Naive thymus-derived CD4-positive, alpha-beta T cell (primary cell): ENCODE measurements at regions of chr9 and their contacts with region 1.

Region 1: DNA sequence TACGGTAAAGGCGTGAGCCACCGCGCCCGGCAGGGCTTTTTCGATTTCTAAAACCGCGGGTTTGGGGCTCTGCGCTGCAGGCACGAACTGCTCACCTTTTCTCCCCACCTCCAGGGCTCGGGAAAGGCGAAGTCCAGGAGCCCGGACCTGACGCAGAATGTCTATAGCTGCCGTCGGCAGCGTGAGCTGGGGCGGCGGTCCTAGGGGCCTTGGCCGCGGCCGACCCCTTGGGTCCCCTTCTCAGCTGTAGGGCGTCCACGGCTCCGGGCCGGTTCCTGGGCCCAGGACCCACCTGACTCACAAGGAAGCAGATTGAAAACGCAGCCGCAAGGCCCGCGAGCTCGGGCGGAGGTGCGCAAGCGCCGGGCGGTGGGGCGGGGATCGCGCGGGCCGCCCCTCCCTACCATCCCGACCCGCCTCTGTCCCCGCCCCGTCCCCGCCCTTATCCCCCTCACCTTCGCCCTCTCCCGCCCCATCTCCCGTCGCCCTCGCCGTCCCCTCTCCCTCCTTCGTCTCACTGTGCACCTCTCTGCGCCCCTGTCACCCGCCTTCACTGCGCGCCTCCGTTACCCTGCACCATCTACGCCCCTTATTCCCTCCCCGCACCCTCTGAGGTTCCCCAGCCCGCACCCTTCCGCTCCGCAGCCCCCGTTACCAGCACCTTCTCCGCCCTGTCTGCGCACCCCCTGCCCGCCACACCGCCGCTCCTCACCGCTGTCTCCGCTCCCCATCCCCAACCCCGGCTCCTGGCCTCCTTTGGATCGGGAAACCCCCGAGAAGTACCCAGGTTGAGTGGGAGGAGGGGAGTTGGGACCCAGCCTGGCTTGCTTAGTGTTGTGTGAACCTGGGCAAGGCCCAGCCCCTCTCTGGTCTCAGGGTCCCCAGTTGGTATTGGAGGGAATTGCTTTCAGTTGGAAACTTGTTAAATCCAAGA is at the start of gene HDHD3:
- DNase-seq: peak; percentile 70 to 84 (median 81)
- ATAC-seq: peak; percentile 96
- H3K4me3 ChIP-seq: peak within 1 kb of the TSS; percentile 81
- H3K4me3 Mint-ChIP-seq: peak within 1 kb of the TSS; percentile 82 to 98 (median 90)
- H3K27ac ChIP-seq: peak within 1 kb of the TSS; percentile 94
- H3K27ac Mint-ChIP-seq: peak within 1 kb of the TSS; percentile 68 to 97 (median 85)
- H3K4me1 ChIP-seq: peaks cover 0 to 7% of the 10 kb centered on the region in 2 donors
- H3K4me1 Mint-ChIP-seq: peaks cover 14 to 17% (median 16%) of the 10 kb centered on the region in 7 donors
- H3K27me3 ChIP-seq: no peaks in the 10 kb centered on the region
- H3K27me3 Mint-ChIP-seq: peaks cover 0 to 3% (median 0%) of the 10 kb centered on the region in 5 donors
- total RNA-seq, gene HDHD3: 11.3 to 32.2 (median 20.5) TPM

Region 2: DNA sequence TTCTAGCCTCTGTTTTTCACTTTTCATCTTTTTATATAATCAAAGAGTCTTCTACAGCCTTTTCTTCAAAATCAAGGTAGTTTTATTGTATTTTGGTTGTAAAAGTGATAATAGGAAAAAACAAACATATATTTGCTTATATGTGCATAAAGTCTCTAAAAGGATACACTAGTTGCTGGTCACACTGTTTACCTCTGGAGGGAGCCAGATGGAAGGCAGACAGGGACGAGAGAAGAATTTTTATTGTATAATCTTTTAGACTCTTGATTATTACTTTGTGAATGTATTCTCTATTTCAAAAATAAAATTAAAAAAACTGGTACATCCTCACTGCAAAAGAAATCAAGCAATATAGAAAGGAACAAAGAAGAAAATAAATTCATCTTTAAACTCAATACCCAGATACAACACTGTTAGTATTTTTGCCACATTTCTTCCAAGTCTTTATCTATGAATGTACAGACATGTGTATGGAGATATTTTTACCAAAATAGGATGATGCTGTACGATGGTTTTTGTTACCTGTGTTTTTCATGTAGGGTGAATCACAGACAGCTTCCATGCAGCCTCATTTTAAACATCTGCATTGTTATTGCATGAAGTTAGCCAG is 67.6 kb before region 1 on chr9:
- CTCF ChIA-PET with region 1: no interaction called
- POLR2A ChIA-PET with region 1: no interaction called
- intact Hi-C with region 1: loop called in 1 of 2 experiments (anchors 1 kb)
- DNase-seq: peak in 5 of 9 donors; percentile 19 to 45 (median 33)
- ATAC-seq: peak; percentile 57
- H3K4me3 ChIP-seq: no peak overlapping the region
- H3K4me3 Mint-ChIP-seq: no peak overlapping the region
- H3K27ac ChIP-seq: no peak overlapping the region
- H3K27ac Mint-ChIP-seq: no peak overlapping the region
- H3K4me1 ChIP-seq: no peaks in the 10 kb centered on the region
- H3K4me1 Mint-ChIP-seq: no peaks in the 10 kb centered on the region
- H3K27me3 ChIP-seq: no peaks in the 10 kb centered on the region
- H3K27me3 Mint-ChIP-seq: peaks cover 0 to 7% (median 0%) of the 10 kb centered on the region in 5 donors

Region 3: GRCh38 chr9:113340017-113340699 is 36.7 kb before region 1 on chr9 and contains the start of gene WDR31:
- CTCF ChIA-PET with region 1: no interaction called
- POLR2A ChIA-PET with region 1: interaction called, 7 read pairs
- intact Hi-C with region 1: loop called (anchors 1 kb)
- DNase-seq: peak; percentile 52 to 85 (median 75)
- ATAC-seq: peak; percentile 98
- H3K4me3 ChIP-seq: peak within 1 kb of the TSS; percentile 86
- H3K4me3 Mint-ChIP-seq: peak within 1 kb of the TSS; percentile 72 to 91 (median 88)
- H3K27ac ChIP-seq: peak within 1 kb of the TSS; percentile 62
- H3K27ac Mint-ChIP-seq: peak within 1 kb of the TSS; percentile 2 to 85 (median 62)
- H3K4me1 ChIP-seq: peaks cover 4 to 20% of the 10 kb centered on the region in 2 donors
- H3K4me1 Mint-ChIP-seq: peaks cover 12 to 54% (median 30%) of the 10 kb centered on the region in 7 donors
- H3K27me3 ChIP-seq: no peaks in the 10 kb centered on the region
- H3K27me3 Mint-ChIP-seq: peaks cover 0 to 7% (median 0%) of the 10 kb centered on the region in 5 donors
- total RNA-seq, gene WDR31: 0.27 to 1.7 (median 1.0) TPM

Region 4: DNA sequence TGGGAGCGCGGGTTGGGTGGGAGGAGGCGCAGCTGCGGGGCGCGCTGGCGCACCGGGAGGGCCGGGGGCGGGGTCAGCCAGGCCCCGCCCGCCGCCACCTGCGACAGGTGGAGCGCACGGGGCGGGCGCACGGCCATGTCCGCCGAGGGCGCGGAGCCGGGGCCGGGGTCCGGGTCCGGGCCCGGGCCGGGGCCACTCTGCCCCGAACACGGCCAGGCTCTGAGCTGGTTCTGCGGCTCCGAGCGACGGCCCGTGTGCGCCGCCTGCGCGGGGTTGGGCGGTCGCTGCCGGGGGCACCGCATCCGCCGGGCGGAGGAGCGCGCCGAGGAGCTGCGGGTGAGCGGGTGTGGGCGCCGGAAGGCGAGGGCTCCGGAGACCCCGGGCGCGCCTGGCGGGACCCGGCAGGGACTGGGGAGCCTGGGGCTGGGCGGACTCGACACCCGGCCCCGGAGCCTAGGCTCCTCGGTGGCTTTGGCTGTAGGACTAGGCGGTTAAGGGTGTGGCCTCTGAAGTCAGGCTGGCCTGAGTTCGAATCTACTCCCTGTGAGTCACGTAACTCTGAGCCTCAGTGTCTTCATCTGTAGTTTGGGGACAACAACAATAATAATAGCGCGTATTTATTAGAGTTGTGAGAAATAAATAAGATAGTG is 27.3 kb before region 1 on chr9 and contains the start of gene BSPRY:
- CTCF ChIA-PET with region 1: no interaction called
- POLR2A ChIA-PET with region 1: interaction called, 4 read pairs
- intact Hi-C with region 1: loop called (anchors 1 to 2 kb)
- DNase-seq: peak in 7 of 9 donors; percentile 27 to 67 (median 44)
- ATAC-seq: peak; percentile 70
- H3K4me3 ChIP-seq: peak within 1 kb of the TSS; percentile 54
- H3K4me3 Mint-ChIP-seq: peak within 1 kb of the TSS; percentile 73 to 93 (median 81)
- H3K27ac ChIP-seq: no peak within 1 kb of the TSS
- H3K27ac Mint-ChIP-seq: peak within 1 kb of the TSS in 3 of 9 donors; percentile 5 to 87 (median 57)
- H3K4me1 ChIP-seq: peaks cover 13 to 15% of the 10 kb centered on the region in 2 donors
- H3K4me1 Mint-ChIP-seq: peaks cover 10 to 49% (median 21%) of the 10 kb centered on the region in 7 donors
- H3K27me3 ChIP-seq: peaks cover 3 to 5% of the 10 kb centered on the region in 2 donors
- H3K27me3 Mint-ChIP-seq: peaks cover 0 to 40% (median 29%) of the 10 kb centered on the region in 5 donors
- total RNA-seq, gene BSPRY: 0.13 to 9.6 (median 1.2) TPM in 3 of 5 experiments, not detected in the others

Region 5: GRCh38 chr9:113436728-113437471 is 60.0 kb after region 1 on chr9:
- CTCF ChIA-PET with region 1: no interaction called
- POLR2A ChIA-PET with region 1: no interaction called
- intact Hi-C with region 1: loop called in 1 of 2 experiments (anchors 2 kb)
- DNase-seq: no peak
- ATAC-seq: no peak
- H3K4me3 ChIP-seq: no peak overlapping the region
- H3K4me3 Mint-ChIP-seq: no peak overlapping the region
- H3K27ac ChIP-seq: no peak overlapping the region
- H3K27ac Mint-ChIP-seq: no peak overlapping the region
- H3K4me1 ChIP-seq: no peaks in the 10 kb centered on the region
- H3K4me1 Mint-ChIP-seq: peaks cover 0 to 4% (median 0%) of the 10 kb centered on the region in 7 donors
- H3K27me3 ChIP-seq: no peaks in the 10 kb centered on the region
- H3K27me3 Mint-ChIP-seq: peaks cover 0 to 31% (median 0%) of the 10 kb centered on the region in 5 donors